Spleen (tissue), 13 donors: ENCODE measurements at regions of chr16 and their contacts with region 1.

Region 1: GRCh38 chr16:49407873-49408550 is 34.4 kb downstream of the C16orf78 start:
- DNase-seq: peak; percentile 90
- H3K4me3 ChIP-seq: no peak overlapping the region
- H3K27ac ChIP-seq: no peak overlapping the region
- H3K4me1 ChIP-seq: peaks cover 0 to 10% (median 7%) of the 10 kb centered on the region in 6 donors
- H3K27me3 ChIP-seq: peaks cover 0 to 3% (median 0%) of the 10 kb centered on the region in 7 donors
- CTCF ChIP-seq: peak; percentile 63 to 96 (median 85)
- POLR2A ChIP-seq: no peak

Region 2: GRCh38 chr16:49592546-49593423 is 184.8 kb after region 1 on chr16:
- intact Hi-C with region 1: loop called (anchors 10 kb)
- DNase-seq: peak; percentile 56
- H3K4me3 ChIP-seq: no peak overlapping the region
- H3K27ac ChIP-seq: no peak overlapping the region
- H3K4me1 ChIP-seq: peaks cover 0 to 23% (median 11%) of the 10 kb centered on the region in 6 donors
- H3K27me3 ChIP-seq: no peaks in the 10 kb centered on the region
- CTCF ChIP-seq: peak; percentile 23 to 85 (median 67)
- POLR2A ChIP-seq: no peak

Region 3: DNA sequence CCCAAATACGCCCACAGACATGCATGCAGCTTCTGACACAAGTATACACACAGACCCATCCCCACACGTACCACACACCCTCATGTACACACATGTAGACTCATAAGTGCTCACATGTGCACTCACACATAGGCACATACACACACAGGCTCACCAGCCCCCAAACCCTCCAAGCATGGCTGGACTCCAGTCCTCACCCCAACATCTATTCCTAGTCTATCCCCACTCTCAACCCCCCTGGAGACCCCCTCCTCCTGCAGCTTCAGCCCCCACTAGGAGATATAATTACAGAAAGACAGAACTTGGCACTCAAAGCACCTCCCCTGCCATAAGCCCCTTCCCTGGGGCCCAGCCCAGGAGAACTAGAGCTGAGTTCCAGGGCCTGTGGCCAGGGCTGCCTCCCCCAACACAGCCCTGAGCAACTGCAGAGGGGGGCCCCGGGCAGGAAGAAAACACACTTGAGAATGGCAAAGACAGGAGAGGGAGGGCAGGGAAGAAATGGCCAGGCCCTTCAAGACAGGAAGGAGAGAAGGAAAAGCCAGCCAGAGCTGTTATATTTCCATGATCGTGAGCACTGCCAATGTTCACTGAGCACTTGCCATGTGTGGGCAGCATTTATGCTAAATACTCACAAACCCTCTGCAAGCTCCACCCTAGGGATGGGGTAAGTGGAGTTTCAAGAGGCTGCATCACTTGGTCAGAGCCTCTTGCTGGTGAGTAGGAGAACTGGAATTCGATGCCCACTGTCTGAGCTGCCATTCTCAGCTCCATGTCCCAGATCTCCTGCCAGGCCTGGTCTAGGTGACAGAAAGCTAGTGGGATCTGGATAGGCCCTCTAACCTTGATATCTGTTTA is 223.4 kb after region 1 on chr16:
- intact Hi-C with region 1: no loop called
- DNase-seq: peak; percentile 49
- H3K4me3 ChIP-seq: no peak overlapping the region
- H3K27ac ChIP-seq: no peak overlapping the region
- H3K4me1 ChIP-seq: peaks cover 0 to 9% (median 0%) of the 10 kb centered on the region in 6 donors
- H3K27me3 ChIP-seq: no peaks in the 10 kb centered on the region
- CTCF ChIP-seq: no peak
- POLR2A ChIP-seq: no peak

Region 4: GRCh38 chr16:49921791-49922456 is 513.9 kb after region 1 on chr16:
- intact Hi-C with region 1: loop called (anchors 5 kb)
- DNase-seq: peak; percentile 68
- H3K4me3 ChIP-seq: no peak overlapping the region
- H3K27ac ChIP-seq: no peak overlapping the region
- H3K4me1 ChIP-seq: no peaks in the 10 kb centered on the region
- H3K27me3 ChIP-seq: peaks cover 0 to 16% (median 0%) of the 10 kb centered on the region in 7 donors
- CTCF ChIP-seq: peak in 8 of 11 experiments; percentile 27 to 55 (median 42)
- POLR2A ChIP-seq: no peak